Pancreas (tissue), 10 donors: ENCODE measurements at regions of chr2 and their contacts with region 1.

Region 1: GRCh38 chr2:156341452-156342253 is 9.1 kb upstream of the NR4A2 start:
- DNase-seq: peak; percentile 86 to 93 (median 90)
- ATAC-seq: peak; percentile 73 to 86 (median 80)
- H3K4me3 ChIP-seq: peak overlapping the region; percentile 60 to 90 (median 81)
- H3K27ac ChIP-seq: peak overlapping the region; percentile 99 to 100 (median 100)
- H3K4me1 ChIP-seq: peaks cover 10 to 38% (median 30%) of the 10 kb centered on the region in 3 donors
- H3K27me3 ChIP-seq: no peaks in the 10 kb centered on the region
- CTCF ChIP-seq: no peak

Region 2: DNA sequence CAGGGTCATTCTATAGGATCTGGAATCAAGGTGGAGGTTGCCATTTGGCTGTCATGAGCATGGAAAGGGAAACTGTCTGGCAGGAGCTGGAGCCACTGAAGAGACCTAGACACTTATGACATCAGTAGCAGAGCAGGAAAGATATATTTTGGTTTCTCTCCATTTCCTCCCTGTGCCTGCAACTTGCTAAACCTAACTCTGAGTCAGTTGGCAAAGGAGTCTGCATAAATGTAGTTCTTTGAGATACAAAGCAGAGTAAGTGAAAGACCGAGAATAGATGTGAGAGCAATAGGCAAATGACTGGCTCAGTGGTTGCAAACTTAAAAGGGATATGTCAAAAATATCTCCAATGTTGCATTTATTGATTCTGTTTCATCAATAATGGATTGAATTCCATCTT is 885.4 kb before region 1 on chr2:
- intact Hi-C with region 1: no loop called
- DNase-seq: no peak
- ATAC-seq: no peak
- H3K4me3 ChIP-seq: no peak overlapping the region
- H3K27ac ChIP-seq: no peak overlapping the region
- H3K4me1 ChIP-seq: no peaks in the 10 kb centered on the region
- H3K27me3 ChIP-seq: no peaks in the 10 kb centered on the region
- CTCF ChIP-seq: no peak

Region 3: DNA sequence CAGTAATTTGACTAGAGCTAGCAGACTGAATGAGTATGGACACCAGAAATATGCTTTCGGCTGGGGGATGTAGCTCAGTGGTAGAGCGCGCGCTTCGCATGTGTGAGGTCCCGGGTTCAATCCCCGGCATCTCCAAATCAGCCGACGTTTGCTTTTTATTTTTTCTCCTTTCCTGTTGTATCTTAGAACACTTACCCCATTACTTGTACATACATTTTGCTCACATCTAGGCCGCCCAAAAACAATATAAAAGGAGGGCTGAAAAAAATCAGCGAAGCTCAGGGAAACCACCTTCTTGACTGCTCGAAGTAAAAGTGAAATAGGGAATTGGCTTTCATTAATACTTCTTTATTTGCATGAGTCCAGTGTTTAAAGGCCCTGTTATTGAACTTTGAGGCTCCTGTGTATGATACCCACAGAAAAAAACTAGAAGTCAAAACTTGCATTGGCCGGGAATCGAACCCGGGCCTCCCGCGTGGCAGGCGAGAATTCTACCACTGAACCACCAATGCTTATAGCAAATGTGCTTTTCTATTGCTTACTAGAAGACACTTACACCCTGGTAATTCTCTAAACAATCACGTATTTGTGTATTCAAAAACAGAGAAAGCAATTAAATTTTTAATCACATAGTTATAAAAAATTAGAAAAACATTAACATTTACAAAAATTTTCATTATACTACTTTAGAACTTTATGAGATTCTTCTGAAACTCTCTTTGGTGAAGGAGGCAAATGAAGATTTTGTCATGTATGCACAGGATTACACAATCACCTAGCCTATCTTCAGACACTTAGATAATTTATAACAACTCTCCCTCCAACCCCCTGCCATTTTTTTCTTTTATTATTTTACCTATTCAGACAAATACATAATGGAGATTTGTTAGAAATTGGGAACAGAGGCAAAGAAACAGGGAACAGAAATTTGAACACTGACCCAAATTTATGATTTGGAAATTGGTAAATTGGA is 59.3 kb after region 1 on chr2:
- intact Hi-C with region 1: loop called in 2 of 3 experiments (anchors 10 kb)
- DNase-seq: peak; percentile 49 to 85 (median 71)
- ATAC-seq: peak; percentile 80 to 89 (median 84)
- H3K4me3 ChIP-seq: peak overlapping the region; percentile 23 to 68 (median 51)
- H3K27ac ChIP-seq: peak overlapping the region; percentile 73 to 94 (median 88)
- H3K4me1 ChIP-seq: peaks cover 2 to 12% (median 11%) of the 10 kb centered on the region in 3 donors
- H3K27me3 ChIP-seq: no peaks in the 10 kb centered on the region
- CTCF ChIP-seq: no peak